ENCODE measurements at regions of chr10 and their contacts with region 1.

Region 1: DNA sequence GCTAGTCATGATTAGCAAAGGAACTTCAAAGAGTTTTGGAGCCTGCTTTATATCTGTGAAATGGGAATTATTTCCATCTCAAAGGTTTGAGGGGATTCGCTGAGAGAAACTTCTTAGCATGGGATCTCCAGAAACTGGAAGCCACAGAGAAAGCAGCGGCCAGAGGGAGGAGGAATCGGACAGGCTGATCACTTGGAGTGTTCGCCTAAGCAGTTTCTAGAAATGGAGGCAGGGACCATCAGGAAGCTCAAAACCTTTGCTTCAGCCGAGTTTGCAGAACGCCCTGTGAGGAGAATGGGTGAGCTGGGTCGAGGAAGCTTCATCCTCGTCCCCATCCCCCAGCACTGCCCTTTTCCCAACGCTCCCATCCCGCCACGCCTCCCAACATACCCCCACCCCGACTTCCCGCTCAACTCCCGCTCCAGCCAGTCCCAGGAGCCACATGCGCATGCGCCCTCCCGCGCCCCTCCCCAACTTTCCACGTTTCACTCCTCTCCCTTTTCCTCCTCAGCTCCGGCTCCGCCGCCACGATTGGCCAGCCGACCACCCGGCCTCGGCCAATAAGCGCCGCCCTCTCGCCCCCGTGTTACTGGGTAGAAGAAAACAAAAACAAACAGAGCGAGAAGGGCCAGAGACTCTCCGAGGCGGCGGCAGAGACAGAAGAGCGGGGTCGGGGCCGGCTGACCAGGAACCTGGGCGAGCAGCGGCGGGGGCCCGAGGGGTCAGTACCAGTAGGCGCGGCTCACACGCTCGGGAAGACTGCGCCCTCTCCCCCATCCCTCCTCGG is at the start of gene PDCD4:
- DNase-seq: peak; percentile 92
- ATAC-seq: peak; percentile 74
- H3K4me3 ChIP-seq: peak within 1 kb of the TSS; percentile 82 to 94 (median 85)
- H3K4me3 Mint-ChIP-seq: peak within 1 kb of the TSS; percentile 91
- H3K27ac ChIP-seq: peak within 1 kb of the TSS; percentile 89 to 94
- H3K27ac Mint-ChIP-seq: peak within 1 kb of the TSS; percentile 96
- H3K4me1 ChIP-seq: peaks cover 61% of the 10 kb centered on the region in 2 donors
- H3K4me1 Mint-ChIP-seq: peaks cover 60% of the 10 kb centered on the region
- H3K27me3 ChIP-seq: no peaks in the 10 kb centered on the region
- H3K27me3 Mint-ChIP-seq: no peaks in the 10 kb centered on the region
- CTCF ChIP-seq: no peak
- total RNA-seq, gene PDCD4: 169 and 185 TPM in 2 replicates

Region 2: GRCh38 chr10:110724116-110724921 is 147.2 kb before region 1 on chr10:
- CTCF ChIA-PET with region 1: no interaction called
- POLR2A ChIA-PET with region 1: no interaction called
- intact Hi-C with region 1: no loop called
- DNase-seq: peak; percentile 58
- ATAC-seq: peak; percentile 50
- H3K4me3 ChIP-seq: peak overlapping the region in 2 of 5 experiments; percentile 6 to 7
- H3K4me3 Mint-ChIP-seq: peak overlapping the region; percentile 79
- H3K27ac ChIP-seq: peak overlapping the region in 1 of 2 donors; percentile 4
- H3K27ac Mint-ChIP-seq: peak overlapping the region; percentile 27
- H3K4me1 ChIP-seq: peaks cover 24 to 34% of the 10 kb centered on the region in 2 donors
- H3K4me1 Mint-ChIP-seq: peaks cover 28% of the 10 kb centered on the region
- H3K27me3 ChIP-seq: no peaks in the 10 kb centered on the region
- H3K27me3 Mint-ChIP-seq: peaks cover 22% of the 10 kb centered on the region
- CTCF ChIP-seq: no peak

Region 3: DNA sequence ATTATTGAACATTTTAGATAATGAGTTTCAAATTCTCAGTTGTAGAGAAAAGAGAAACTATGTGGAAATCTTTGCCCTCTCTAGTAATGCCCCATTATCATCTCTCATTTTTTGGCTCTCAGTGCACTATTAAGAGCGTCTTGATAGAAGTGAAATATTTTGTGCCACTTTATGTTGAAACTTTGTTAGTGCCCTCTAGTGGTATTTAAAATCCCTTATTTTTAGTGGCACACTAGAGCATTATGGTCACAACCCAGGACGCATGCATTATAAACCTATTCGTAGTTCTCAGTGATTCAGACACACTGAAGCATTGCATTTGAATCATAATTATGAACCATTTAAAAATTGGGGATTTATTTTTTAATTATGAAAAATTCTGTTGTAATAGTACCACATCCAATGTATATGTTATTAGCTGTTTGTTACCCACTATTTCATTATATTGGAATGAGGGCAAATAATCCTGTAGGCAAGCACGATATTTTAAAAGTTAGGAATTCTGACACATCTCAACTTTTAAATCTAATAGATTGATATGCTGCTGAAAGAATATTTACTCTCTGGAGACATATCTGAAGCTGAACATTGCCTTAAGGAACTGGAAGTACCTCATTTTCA is 22.2 kb after region 1 on chr10:
- CTCF ChIA-PET with region 1: interaction called, 13 read pairs
- POLR2A ChIA-PET with region 1: no interaction called
- intact Hi-C with region 1: loop called (anchors 1 kb)
- DNase-seq: peak; percentile 74
- ATAC-seq: peak; percentile 79
- H3K4me3 ChIP-seq: no peak overlapping the region
- H3K4me3 Mint-ChIP-seq: no peak overlapping the region
- H3K27ac ChIP-seq: peak overlapping the region in 1 of 2 donors; percentile 21
- H3K27ac Mint-ChIP-seq: no peak overlapping the region
- H3K4me1 ChIP-seq: peaks cover 0 to 7% of the 10 kb centered on the region in 2 donors
- H3K4me1 Mint-ChIP-seq: peaks cover 24% of the 10 kb centered on the region
- H3K27me3 ChIP-seq: no peaks in the 10 kb centered on the region
- H3K27me3 Mint-ChIP-seq: no peaks in the 10 kb centered on the region
- CTCF ChIP-seq: peak; percentile 79

Region 4: GRCh38 chr10:110901954-110902819 is 30.7 kb after region 1 on chr10:
- CTCF ChIA-PET with region 1: interaction called, 10 read pairs
- POLR2A ChIA-PET with region 1: no interaction called
- intact Hi-C with region 1: no loop called
- DNase-seq: no peak
- ATAC-seq: no peak
- H3K4me3 ChIP-seq: no peak overlapping the region
- H3K4me3 Mint-ChIP-seq: no peak overlapping the region
- H3K27ac ChIP-seq: no peak overlapping the region
- H3K27ac Mint-ChIP-seq: no peak overlapping the region
- H3K4me1 ChIP-seq: no peaks in the 10 kb centered on the region
- H3K4me1 Mint-ChIP-seq: peaks cover 5% of the 10 kb centered on the region
- H3K27me3 ChIP-seq: no peaks in the 10 kb centered on the region
- H3K27me3 Mint-ChIP-seq: no peaks in the 10 kb centered on the region
- CTCF ChIP-seq: no peak

Measured in B cell (primary cell).